HepG2 (cell line): ENCODE measurements at regions of chr22 and their contacts with region 1.

Region 1: GRCh38 chr22:39300186-39300830 is 19.1 kb downstream of the RPL3 start:
- DNase-seq: no peak
- ATAC-seq: peak; percentile 55
- H3K4me3 ChIP-seq: peak overlapping the region; percentile 40 to 68 (median 43)
- H3K27ac ChIP-seq: peak overlapping the region; percentile 32
- H3K4me1 ChIP-seq: peaks cover 97% of the 10 kb centered on the region
- H3K27me3 ChIP-seq: no peaks in the 10 kb centered on the region; a peak in 2 of 5 replicates
- CTCF ChIP-seq: peak; percentile 25; the same call in 1 of the 2 replicates
- EP300 ChIP-seq: no peak
- POLR2A ChIP-seq: no peak
- RAD21 ChIP-seq: no peak

Region 2: GRCh38 chr22:39197396-39197977 is 102.8 kb before region 1 on chr22:
- CTCF ChIA-PET with region 1: no interaction called
- POLR2A ChIA-PET with region 1: no interaction called
- in situ Hi-C with region 1: no loop called
- intact Hi-C with region 1: no loop called
- DNase-seq: no peak
- ATAC-seq: no peak
- H3K4me3 ChIP-seq: no peak overlapping the region
- H3K27ac ChIP-seq: no peak overlapping the region
- H3K4me1 ChIP-seq: no peaks in the 10 kb centered on the region
- H3K27me3 ChIP-seq: no peaks in the 10 kb centered on the region
- CTCF ChIP-seq: no peak
- EP300 ChIP-seq: no peak
- POLR2A ChIP-seq: no peak
- RAD21 ChIP-seq: no peak

Region 3: GRCh38 chr22:39266398-39267030 is 33.8 kb before region 1 on chr22:
- CTCF ChIA-PET with region 1: no interaction called
- POLR2A ChIA-PET with region 1: no interaction called
- in situ Hi-C with region 1: no loop called
- intact Hi-C with region 1: loop called (anchors 5 kb)
- DNase-seq: peak; percentile 76
- ATAC-seq: peak; percentile 85
- H3K4me3 ChIP-seq: peak overlapping the region in 2 of 3 experiments; percentile 16 to 49; a peak in 2 of 6 replicates
- H3K27ac ChIP-seq: peak overlapping the region; percentile 36
- H3K4me1 ChIP-seq: peaks cover 64% of the 10 kb centered on the region
- H3K27me3 ChIP-seq: peaks cover 0 to 10% of the 10 kb centered on the region in 2 experiments; a peak in 2 of 5 replicates
- CTCF ChIP-seq: no peak
- EP300 ChIP-seq: no peak
- POLR2A ChIP-seq: no peak
- RAD21 ChIP-seq: no peak

Region 4: GRCh38 chr22:39276437-39277154 is 23.7 kb before region 1 on chr22:
- CTCF ChIA-PET with region 1: no interaction called
- POLR2A ChIA-PET with region 1: no interaction called
- in situ Hi-C with region 1: no loop called
- intact Hi-C with region 1: no loop called
- DNase-seq: no peak
- ATAC-seq: no peak
- H3K4me3 ChIP-seq: no peak overlapping the region
- H3K27ac ChIP-seq: no peak overlapping the region
- H3K4me1 ChIP-seq: peaks cover 27% of the 10 kb centered on the region
- H3K27me3 ChIP-seq: peaks cover 9 to 36% of the 10 kb centered on the region in 2 experiments
- CTCF ChIP-seq: no peak
- EP300 ChIP-seq: no peak
- POLR2A ChIP-seq: no peak
- RAD21 ChIP-seq: no peak